Activated CD4-positive, alpha-beta memory T cell treated with anti-CD3 and anti-CD28 coated beads for 36 hours (primary cell): ENCODE measurements at regions of chr17 and their contacts with region 1.

Region 1: DNA sequence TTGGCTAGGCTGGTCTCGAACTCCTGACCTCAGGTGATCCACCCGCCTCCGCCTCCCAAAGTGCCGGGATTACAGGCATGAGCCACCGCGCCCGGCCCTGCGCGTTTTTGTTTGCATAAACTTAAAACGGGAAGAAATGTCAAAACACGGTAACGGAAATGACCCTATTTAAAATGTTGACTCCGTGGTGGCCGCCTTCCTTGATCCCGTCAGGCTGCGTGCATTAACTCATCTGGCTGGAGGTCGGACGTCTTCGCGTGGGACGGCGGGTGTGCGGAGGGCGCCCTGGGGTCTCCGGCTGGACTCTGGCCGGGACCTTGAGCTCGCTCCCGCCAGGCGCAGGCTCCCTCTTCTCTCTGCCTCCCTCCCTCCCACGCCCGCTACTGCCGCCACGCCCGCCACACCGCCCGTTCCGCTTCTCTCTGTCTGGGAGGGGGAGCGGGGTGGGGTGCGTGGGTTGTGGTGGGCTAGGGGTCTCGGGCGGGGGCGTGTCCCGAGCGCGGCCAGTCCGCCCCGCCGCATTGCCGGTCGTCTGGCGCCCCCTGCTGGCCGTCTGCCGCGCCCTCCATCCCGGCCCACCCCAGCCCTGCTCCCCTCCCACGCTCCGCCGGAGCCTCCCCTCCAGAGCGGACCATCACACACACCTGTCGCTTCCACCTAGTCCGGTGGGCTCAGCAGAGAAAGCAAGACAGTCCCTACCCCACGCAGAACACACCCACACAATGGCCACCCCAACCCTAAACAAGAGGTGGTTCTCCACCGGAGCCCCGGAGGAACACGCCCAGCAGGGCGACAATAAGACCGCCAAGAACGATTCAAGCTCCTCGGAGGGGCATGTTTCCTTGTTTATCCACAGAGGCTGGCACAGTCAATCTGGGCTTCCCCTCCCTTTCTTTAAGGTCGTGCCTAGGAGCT is 1.2 kb upstream of the CCDC42 start:
- DNase-seq: peak; percentile 84
- H3K4me3 Mint-ChIP-seq: peak overlapping the region; percentile 80
- H3K27ac Mint-ChIP-seq: peak overlapping the region; percentile 74
- H3K4me1 Mint-ChIP-seq: peaks cover 9% of the 10 kb centered on the region
- H3K27me3 Mint-ChIP-seq: no peaks in the 10 kb centered on the region

Region 2: GRCh38 chr17:8376271-8377067 is 369.4 kb before region 1 on chr17 and contains the start of gene KRABD2:
- CTCF ChIA-PET with region 1: interaction called, 10 read pairs
- POLR2A ChIA-PET with region 1: no interaction called
- intact Hi-C with region 1: no loop called
- DNase-seq: peak; percentile 95
- H3K4me3 Mint-ChIP-seq: peak within 1 kb of the TSS; percentile 90
- H3K27ac Mint-ChIP-seq: peak within 1 kb of the TSS; percentile 77
- H3K4me1 Mint-ChIP-seq: peaks cover 54% of the 10 kb centered on the region
- H3K27me3 Mint-ChIP-seq: no peaks in the 10 kb centered on the region

Region 3: GRCh38 chr17:8572764-8573163 is 173.1 kb before region 1 on chr17:
- CTCF ChIA-PET with region 1: no interaction called
- POLR2A ChIA-PET with region 1: no interaction called
- intact Hi-C with region 1: loop called (anchors 2 kb)
- DNase-seq: no peak
- H3K4me3 Mint-ChIP-seq: no peak overlapping the region
- H3K27ac Mint-ChIP-seq: no peak overlapping the region
- H3K4me1 Mint-ChIP-seq: no peaks in the 10 kb centered on the region
- H3K27me3 Mint-ChIP-seq: no peaks in the 10 kb centered on the region

Region 4: DNA sequence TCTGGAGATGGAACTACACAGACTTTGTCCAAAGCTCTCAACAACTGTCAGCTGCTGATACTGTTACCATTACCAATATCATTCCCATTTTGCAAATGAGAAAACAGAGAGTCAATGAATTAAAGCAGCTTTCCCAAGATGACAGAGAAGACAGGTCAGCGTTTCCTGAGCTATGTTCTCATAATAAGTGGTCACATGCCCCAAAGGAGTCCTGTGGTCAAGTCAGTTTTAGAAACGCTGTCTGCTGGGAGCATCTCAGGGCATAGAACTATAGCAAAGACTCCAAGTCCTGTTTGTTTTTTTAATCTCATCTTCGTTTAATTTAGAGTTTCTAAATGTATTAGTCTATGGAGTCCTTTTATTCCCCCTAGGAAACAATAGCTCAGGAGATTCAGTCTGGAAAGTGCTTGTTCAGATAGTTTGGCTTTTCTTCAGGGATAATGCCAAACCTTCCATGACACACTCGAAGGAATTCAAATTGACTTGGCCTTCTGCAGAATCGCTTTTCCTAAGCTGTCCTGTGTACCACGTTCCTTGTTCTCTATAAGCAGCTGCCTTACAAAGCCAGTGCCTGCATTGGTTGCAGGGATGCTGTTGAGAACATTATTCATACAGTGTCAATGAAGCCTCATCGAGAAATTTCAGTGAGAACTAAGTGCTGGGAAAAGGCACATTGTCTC is 13.3 kb before region 1 on chr17:
- CTCF ChIA-PET with region 1: no interaction called
- POLR2A ChIA-PET with region 1: no interaction called
- intact Hi-C with region 1: no loop called
- DNase-seq: no peak
- H3K4me3 Mint-ChIP-seq: no peak overlapping the region
- H3K27ac Mint-ChIP-seq: no peak overlapping the region
- H3K4me1 Mint-ChIP-seq: no peaks in the 10 kb centered on the region
- H3K27me3 Mint-ChIP-seq: no peaks in the 10 kb centered on the region